HepG2 (cell line): ENCODE measurements at regions of chr11 and their contacts with region 1.

Region 1: GRCh38 chr11:12087075-12088004 is 23.1 kb upstream of the MICAL2 start:
- DNase-seq: no peak
- ATAC-seq: peak; percentile 55
- H3K4me3 ChIP-seq: no peak overlapping the region
- H3K27ac ChIP-seq: no peak overlapping the region
- H3K4me1 ChIP-seq: peaks cover 71% of the 10 kb centered on the region
- H3K27me3 ChIP-seq: no peaks in the 10 kb centered on the region; a peak in 1 of 5 replicates
- CTCF ChIP-seq: no peak
- EP300 ChIP-seq: no peak
- POLR2A ChIP-seq: no peak
- RAD21 ChIP-seq: no peak

Region 2: GRCh38 chr11:12066799-12067508 is 20.4 kb before region 1 on chr11:
- CTCF ChIA-PET with region 1: no interaction called
- POLR2A ChIA-PET with region 1: interaction called, 19 read pairs
- in situ Hi-C with region 1: no loop called
- intact Hi-C with region 1: no loop called
- DNase-seq: peak; percentile 50
- ATAC-seq: peak; percentile 69
- H3K4me3 ChIP-seq: peak overlapping the region; percentile 8 to 41 (median 31); a peak in 4 of 6 replicates
- H3K27ac ChIP-seq: peak overlapping the region; percentile 20
- H3K4me1 ChIP-seq: peaks cover 64% of the 10 kb centered on the region
- H3K27me3 ChIP-seq: no peaks in the 10 kb centered on the region
- CTCF ChIP-seq: no peak
- EP300 ChIP-seq: no peak; a peak in 1 of 4 replicates
- POLR2A ChIP-seq: no peak
- RAD21 ChIP-seq: no peak

Region 3: GRCh38 chr11:12122083-12122482 is 34.7 kb after region 1 on chr11:
- CTCF ChIA-PET with region 1: no interaction called
- POLR2A ChIA-PET with region 1: no interaction called
- in situ Hi-C with region 1: no loop called
- intact Hi-C with region 1: loop called (anchors 5 kb)
- DNase-seq: peak; percentile 32
- ATAC-seq: peak; percentile 92
- H3K4me3 ChIP-seq: no peak overlapping the region
- H3K27ac ChIP-seq: no peak overlapping the region
- H3K4me1 ChIP-seq: peaks cover 21% of the 10 kb centered on the region
- H3K27me3 ChIP-seq: no peaks in the 10 kb centered on the region
- CTCF ChIP-seq: peak; percentile 56
- EP300 ChIP-seq: no peak
- POLR2A ChIP-seq: no peak
- RAD21 ChIP-seq: peak; percentile 13; the same call in 1 of the 2 replicates